Endothelial cell of umbilical vein (primary cell): ENCODE measurements at regions of chr3 and their contacts with region 1.

Region 1: DNA sequence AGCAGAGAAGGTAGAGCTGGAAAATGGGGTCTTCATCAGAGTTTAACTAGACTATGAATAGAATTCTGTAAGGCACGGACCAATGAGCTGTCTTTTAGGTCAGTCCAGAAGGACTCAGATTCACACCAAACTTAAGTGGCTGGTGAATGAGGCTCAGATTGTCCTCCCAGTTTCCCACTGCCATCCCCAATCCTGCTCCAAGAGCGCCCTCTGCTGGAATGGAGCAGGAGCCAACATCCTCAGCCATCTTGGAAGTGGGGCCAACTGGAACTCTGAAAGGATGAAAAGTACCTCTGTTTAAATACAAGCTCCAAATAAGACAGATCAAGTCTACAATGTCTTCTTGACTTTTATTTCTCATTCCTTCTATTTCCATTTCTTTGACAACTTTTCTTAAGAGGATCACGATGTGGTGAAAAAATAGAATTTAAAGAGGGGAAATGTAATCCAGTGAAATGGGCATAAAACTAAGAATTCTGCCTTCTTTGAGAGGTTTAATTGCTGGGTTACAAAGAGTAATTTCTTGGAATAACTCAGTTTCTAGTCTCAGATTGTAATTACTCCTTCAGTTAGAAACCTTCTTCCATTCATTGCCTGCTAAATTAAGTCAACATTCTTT is 217.1 kb upstream of the TPRG1 start:
- DNase-seq: peak; percentile 84
- H3K4me3 ChIP-seq: no peak overlapping the region
- H3K27ac ChIP-seq: no peak overlapping the region
- H3K4me1 ChIP-seq: peaks cover 21% of the 10 kb centered on the region
- H3K27me3 ChIP-seq: no peaks in the 10 kb centered on the region
- CTCF ChIP-seq: peak; percentile 84 to 95
- POLR2A ChIP-seq: no peak

Region 2: GRCh38 chr3:187745201-187746058 is 1209.3 kb before region 1 on chr3 and contains the start of gene BCL6:
- CTCF ChIA-PET with region 1: interaction called, 466 read pairs
- POLR2A ChIA-PET with region 1: interaction called, 13 read pairs
- dilution Hi-C with region 1: loop called (anchors 5 kb)
- intact Hi-C with region 1: loop called (anchors 1 kb)
- DNase-seq: peak; percentile 95
- H3K4me3 ChIP-seq: peak within 1 kb of the TSS; percentile 50 to 88 (median 85)
- H3K27ac ChIP-seq: peak within 1 kb of the TSS; percentile 100
- H3K4me1 ChIP-seq: peaks cover 21% of the 10 kb centered on the region
- H3K27me3 ChIP-seq: no peaks in the 10 kb centered on the region
- CTCF ChIP-seq: no peak
- POLR2A ChIP-seq: peak; percentile 89
- total RNA-seq, gene BCL6: 9.6 and 12.1 TPM in 2 replicates

Region 3: GRCh38 chr3:188262913-188263683 is 691.6 kb before region 1 on chr3:
- CTCF ChIA-PET with region 1: interaction called, 12 read pairs
- POLR2A ChIA-PET with region 1: no interaction called
- dilution Hi-C with region 1: no loop called
- intact Hi-C with region 1: no loop called
- DNase-seq: peak; percentile 97
- H3K4me3 ChIP-seq: no peak overlapping the region
- H3K27ac ChIP-seq: peak overlapping the region; percentile 88
- H3K4me1 ChIP-seq: peaks cover 79% of the 10 kb centered on the region
- H3K27me3 ChIP-seq: no peaks in the 10 kb centered on the region
- CTCF ChIP-seq: no peak
- POLR2A ChIP-seq: peak; percentile 65

Region 4: GRCh38 chr3:188507244-188507720 is 447.4 kb before region 1 on chr3:
- CTCF ChIA-PET with region 1: no interaction called
- POLR2A ChIA-PET with region 1: no interaction called
- dilution Hi-C with region 1: no loop called
- intact Hi-C with region 1: loop called (anchors 5 kb)
- DNase-seq: peak; percentile 83
- H3K4me3 ChIP-seq: no peak overlapping the region
- H3K27ac ChIP-seq: peak overlapping the region; percentile 33
- H3K4me1 ChIP-seq: peaks cover 25% of the 10 kb centered on the region
- H3K27me3 ChIP-seq: no peaks in the 10 kb centered on the region
- CTCF ChIP-seq: no peak
- POLR2A ChIP-seq: no peak

Region 5: GRCh38 chr3:188749010-188749617 is 205.6 kb before region 1 on chr3:
- CTCF ChIA-PET with region 1: interaction called, 21 read pairs
- POLR2A ChIA-PET with region 1: no interaction called
- dilution Hi-C with region 1: no loop called
- intact Hi-C with region 1: loop called (anchors 2 kb)
- DNase-seq: peak; percentile 9
- H3K4me3 ChIP-seq: no peak overlapping the region
- H3K27ac ChIP-seq: no peak overlapping the region
- H3K4me1 ChIP-seq: no peaks in the 10 kb centered on the region
- H3K27me3 ChIP-seq: no peaks in the 10 kb centered on the region
- CTCF ChIP-seq: peak; percentile 53 to 56
- POLR2A ChIP-seq: no peak

Region 6: GRCh38 chr3:188937389-188937788 is 17.3 kb before region 1 on chr3:
- CTCF ChIA-PET with region 1: interaction called, 15 read pairs
- POLR2A ChIA-PET with region 1: interaction called, 9 read pairs
- dilution Hi-C with region 1: no loop called
- intact Hi-C with region 1: no loop called
- DNase-seq: peak; percentile 90
- H3K4me3 ChIP-seq: no peak overlapping the region
- H3K27ac ChIP-seq: no peak overlapping the region
- H3K4me1 ChIP-seq: peaks cover 18% of the 10 kb centered on the region
- H3K27me3 ChIP-seq: no peaks in the 10 kb centered on the region
- CTCF ChIP-seq: no peak
- POLR2A ChIP-seq: no peak